ENCODE measurements at regions of chr7 and their contacts with region 1.

Region 1: DNA sequence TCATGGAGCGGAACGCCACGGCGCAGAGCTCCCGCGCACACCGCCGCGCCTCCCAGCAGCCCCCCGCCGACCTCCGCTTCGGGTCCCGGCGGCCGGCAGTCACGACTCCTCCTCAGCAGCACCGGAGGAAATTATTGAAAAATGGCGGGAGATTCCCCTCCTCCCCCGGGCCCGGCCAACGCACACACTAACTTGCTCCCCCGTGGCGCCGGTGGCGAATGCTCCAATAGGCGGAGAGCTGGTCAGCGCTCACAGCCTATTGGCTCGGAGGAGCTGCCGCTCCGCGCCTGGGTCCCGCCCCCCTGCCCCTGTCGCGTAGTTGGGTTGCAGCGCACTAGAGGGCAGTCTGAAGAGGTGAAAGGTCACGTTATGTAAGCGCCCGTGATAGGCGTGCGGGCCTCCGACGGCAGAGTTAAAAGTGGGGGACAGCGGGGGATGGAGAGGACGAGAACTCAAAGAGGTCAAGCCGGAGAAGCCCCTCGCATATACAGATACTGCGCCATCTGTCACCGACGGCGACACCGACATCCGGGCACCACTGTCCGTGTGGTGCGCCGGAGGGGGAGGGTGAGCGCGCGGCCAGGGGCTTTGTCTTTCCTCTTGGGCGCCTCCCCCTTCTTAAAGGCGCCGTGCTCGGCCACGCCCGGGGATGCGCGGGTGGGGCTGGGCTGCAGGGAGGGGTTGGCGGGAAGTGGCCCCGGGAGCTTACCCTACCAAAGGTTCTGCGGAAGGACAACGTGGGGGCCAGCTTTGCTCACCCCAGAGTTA is at the start of gene BAZ1B:
- DNase-seq: peak; percentile 99
- ATAC-seq: peak; percentile 95
- H3K4me3 Mint-ChIP-seq: peak within 1 kb of the TSS; percentile 99
- H3K27ac Mint-ChIP-seq: peak within 1 kb of the TSS; percentile 98
- H3K4me1 Mint-ChIP-seq: peaks cover 53% of the 10 kb centered on the region
- H3K27me3 Mint-ChIP-seq: no peaks in the 10 kb centered on the region
- total RNA-seq, gene BAZ1B: 90.2 to 98.6 TPM

Region 2: GRCh38 chr7:73557108-73557396 is 34.8 kb after region 1 on chr7:
- CTCF ChIA-PET with region 1: interaction called, 4 read pairs
- POLR2A ChIA-PET with region 1: interaction called, 16 read pairs
- intact Hi-C with region 1: loop called (anchors 1 kb)
- DNase-seq: peak; percentile 95
- ATAC-seq: peak; percentile 92
- H3K4me3 Mint-ChIP-seq: peak overlapping the region; percentile 93
- H3K27ac Mint-ChIP-seq: peak overlapping the region; percentile 91
- H3K4me1 Mint-ChIP-seq: peaks cover 35% of the 10 kb centered on the region
- H3K27me3 Mint-ChIP-seq: no peaks in the 10 kb centered on the region

Region 3: GRCh38 chr7:73683056-73683964 is 161.0 kb after region 1 on chr7 and contains the starts of genes BUD23 and DNAJC30:
- CTCF ChIA-PET with region 1: interaction called, 3 read pairs
- POLR2A ChIA-PET with region 1: no interaction called
- intact Hi-C with region 1: loop called in 1 of 2 experiments (anchors 1 kb)
- DNase-seq: peak; percentile 99
- ATAC-seq: peak; percentile 98
- H3K4me3 Mint-ChIP-seq: peak within 1 kb of the TSS; percentile 89
- H3K27ac Mint-ChIP-seq: peak within 1 kb of the TSS; percentile 96
- H3K4me1 Mint-ChIP-seq: peaks cover 41% of the 10 kb centered on the region
- H3K27me3 Mint-ChIP-seq: no peaks in the 10 kb centered on the region
- total RNA-seq, gene BUD23: 71.4 to 95.5 TPM
- total RNA-seq, gene DNAJC30: 6.9 to 7.8 TPM

Region 4: DNA sequence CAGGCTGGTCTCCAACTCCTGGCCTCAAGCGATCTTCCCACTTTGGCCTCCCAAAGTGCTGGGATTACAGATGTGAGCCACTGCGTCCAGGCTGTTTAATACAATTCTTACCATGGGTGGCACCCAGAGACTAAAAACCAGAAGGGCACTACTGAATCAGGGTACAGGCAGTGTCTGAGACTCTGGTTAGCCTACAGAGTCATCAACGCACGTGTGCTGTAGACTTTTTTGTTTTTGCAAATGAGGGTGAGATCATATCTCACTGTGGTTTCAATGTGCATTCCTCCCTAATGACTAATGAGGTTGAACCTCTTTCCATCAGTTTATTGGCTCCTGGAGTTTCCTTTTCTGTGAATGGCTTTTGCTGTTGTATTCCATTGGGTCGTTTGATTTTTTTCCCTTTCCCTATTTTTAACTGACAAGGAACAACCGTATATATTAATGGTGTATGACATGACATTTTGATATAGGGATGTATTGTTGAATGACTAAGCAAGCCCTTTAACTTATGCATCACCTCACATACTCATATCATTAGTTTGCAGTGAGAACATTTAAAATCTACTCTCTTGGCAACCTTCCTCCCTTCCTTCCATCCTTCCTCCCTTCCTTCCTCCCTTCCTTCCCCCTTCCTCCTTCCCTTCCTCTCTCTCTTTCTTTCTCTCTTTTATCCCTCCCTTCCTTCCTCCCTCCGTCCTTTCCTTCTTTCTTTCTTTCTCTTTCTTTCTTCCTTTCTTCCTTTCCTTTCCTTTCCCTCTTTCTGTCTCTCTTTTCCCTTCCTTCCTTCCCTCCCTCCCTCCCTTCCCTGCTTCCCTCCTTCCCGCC is 329.3 kb after region 1 on chr7:
- CTCF ChIA-PET with region 1: no interaction called
- POLR2A ChIA-PET with region 1: no interaction called
- intact Hi-C with region 1: loop called in 1 of 2 experiments (anchors 10 kb)
- DNase-seq: peak; percentile 60
- ATAC-seq: peak; percentile 96
- H3K4me3 Mint-ChIP-seq: no peak overlapping the region
- H3K27ac Mint-ChIP-seq: peak overlapping the region; percentile 65
- H3K4me1 Mint-ChIP-seq: peaks cover 33% of the 10 kb centered on the region
- H3K27me3 Mint-ChIP-seq: peaks cover 12% of the 10 kb centered on the region

Measured in activated CD4-positive, alpha-beta T cell treated with anti-CD3 and anti-CD28 coated beads for 36 hours (primary cell).